Activated B cell treated with CpG ODN at 0.5 μM for 24 hours (primary cell): ENCODE measurements at regions of chr2 and their contacts with region 1.

Region 1: GRCh38 chr2:224449212-224450147 is 47.6 kb upstream of the FAM124B start:
- DNase-seq: no peak
- ATAC-seq: peak; percentile 45
- H3K4me3 Mint-ChIP-seq: no peak overlapping the region
- H3K27ac Mint-ChIP-seq: no peak overlapping the region
- H3K4me1 Mint-ChIP-seq: peaks cover 2% of the 10 kb centered on the region
- H3K27me3 Mint-ChIP-seq: no peaks in the 10 kb centered on the region
- CTCF ChIP-seq: no peak

Region 2: GRCh38 chr2:224357098-224357901 is 92.2 kb before region 1 on chr2:
- CTCF ChIA-PET with region 1: interaction called, 4 read pairs
- POLR2A ChIA-PET with region 1: no interaction called
- intact Hi-C with region 1: loop called (anchors 1 kb)
- DNase-seq: no peak
- ATAC-seq: peak; percentile 73
- H3K4me3 Mint-ChIP-seq: no peak overlapping the region
- H3K27ac Mint-ChIP-seq: no peak overlapping the region
- H3K4me1 Mint-ChIP-seq: no peaks in the 10 kb centered on the region
- H3K27me3 Mint-ChIP-seq: peaks cover 8% of the 10 kb centered on the region
- CTCF ChIP-seq: no peak